Stomach (tissue), 19 donors: ENCODE measurements at regions of chr5 and their contacts with region 1.

Region 1: GRCh38 chr5:39005566-39006232 is 68.5 kb downstream of the RICTOR start:
- DNase-seq: peak in 1 of 2 donors; percentile 50
- H3K4me3 ChIP-seq: no peak overlapping the region
- H3K27ac ChIP-seq: no peak overlapping the region
- H3K4me1 ChIP-seq: peaks cover 0 to 12% (median 0%) of the 10 kb centered on the region in 4 donors
- H3K27me3 ChIP-seq: no peaks in the 10 kb centered on the region
- CTCF ChIP-seq: peak in 2 of 7 experiments; percentile 17 to 39
- EP300 ChIP-seq: no peak
- POLR2A ChIP-seq: no peak

Region 2: GRCh38 chr5:38202741-38203140 is 803.0 kb before region 1 on chr5:
- intact Hi-C with region 1: no loop called
- DNase-seq: no peak
- H3K4me3 ChIP-seq: no peak overlapping the region
- H3K27ac ChIP-seq: no peak overlapping the region
- H3K4me1 ChIP-seq: no peaks in the 10 kb centered on the region
- H3K27me3 ChIP-seq: peaks cover 0 to 12% (median 0%) of the 10 kb centered on the region in 3 donors
- CTCF ChIP-seq: no peak
- EP300 ChIP-seq: no peak
- POLR2A ChIP-seq: no peak

Region 3: DNA sequence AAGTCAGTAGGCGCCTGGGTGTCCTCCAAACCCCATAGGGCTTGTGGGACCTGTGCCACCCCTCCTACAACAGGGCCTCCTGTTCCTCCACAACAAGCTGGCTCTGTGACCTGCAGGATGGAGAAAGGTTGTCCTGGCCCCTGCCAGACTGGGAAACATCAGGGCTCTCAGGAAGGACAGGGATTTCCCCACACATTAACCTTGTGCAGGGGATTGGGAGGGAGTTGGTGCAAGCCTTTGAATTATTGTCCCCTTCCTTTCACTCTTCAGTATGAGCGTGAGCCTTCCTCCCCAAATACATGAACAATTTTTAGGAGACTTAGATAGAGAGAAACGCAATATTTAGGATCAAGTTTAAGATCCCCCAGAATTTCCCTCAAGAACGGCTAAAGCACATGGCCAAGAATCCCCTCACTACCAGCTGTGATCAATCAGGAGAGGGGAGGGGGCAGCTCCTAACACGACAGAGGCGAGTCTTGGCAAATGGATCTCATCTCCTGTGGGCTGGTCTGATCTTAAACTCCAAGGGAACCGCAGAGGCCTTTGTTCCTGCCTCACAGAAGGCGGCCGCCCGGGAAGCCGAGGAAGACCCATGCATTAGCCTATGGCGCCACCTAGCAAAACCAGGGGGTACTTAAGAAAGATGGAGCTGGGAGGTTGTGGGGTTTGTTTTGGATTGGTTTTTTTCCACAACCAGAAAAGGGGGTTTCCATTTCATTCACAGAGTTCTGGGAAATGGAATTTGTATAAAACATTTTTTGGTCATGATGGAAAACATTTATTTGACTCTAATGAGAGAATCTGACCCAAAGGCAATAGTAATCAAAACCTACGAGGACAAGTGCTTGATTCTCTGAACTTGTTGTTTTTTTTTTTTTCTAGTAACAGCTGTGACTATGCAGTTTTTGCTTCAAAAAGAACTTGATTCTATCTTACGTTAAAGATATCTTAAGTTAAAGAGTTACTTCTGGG is 196.0 kb before region 1 on chr5:
- intact Hi-C with region 1: no loop called
- DNase-seq: peak; percentile 85 to 96
- H3K4me3 ChIP-seq: no peak overlapping the region
- H3K27ac ChIP-seq: peak overlapping the region in 3 of 5 donors; percentile 9 to 71 (median 51)
- H3K4me1 ChIP-seq: peaks cover 0 to 28% (median 12%) of the 10 kb centered on the region in 4 donors
- H3K27me3 ChIP-seq: peaks cover 0 to 4% (median 0%) of the 10 kb centered on the region in 3 donors
- CTCF ChIP-seq: peak in 5 of 7 experiments; percentile 63 to 86 (median 80)
- EP300 ChIP-seq: no peak
- POLR2A ChIP-seq: no peak

Region 4: DNA sequence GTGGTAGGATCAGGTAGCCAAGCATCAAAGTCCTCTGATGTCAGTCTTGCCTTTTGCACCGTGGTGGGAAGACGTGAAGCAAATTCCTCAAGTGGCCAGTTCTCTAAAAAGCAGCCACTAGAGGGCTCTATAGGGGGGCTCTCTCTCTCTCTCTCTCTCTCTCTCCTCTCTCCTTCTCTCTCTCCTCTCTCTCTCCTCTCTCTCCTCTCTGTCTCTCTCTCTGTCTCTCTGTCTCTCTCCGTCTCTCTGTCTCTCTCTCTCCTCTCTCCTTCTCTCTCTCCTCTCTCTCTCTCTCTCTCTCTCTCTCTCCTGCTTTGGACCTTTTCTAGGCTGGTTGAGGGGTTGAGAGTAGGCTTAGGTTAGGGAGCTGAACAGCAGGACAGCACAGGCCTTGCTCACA is 173.8 kb before region 1 on chr5:
- intact Hi-C with region 1: no loop called
- DNase-seq: peak in 1 of 2 donors; percentile 49
- H3K4me3 ChIP-seq: no peak overlapping the region
- H3K27ac ChIP-seq: no peak overlapping the region
- H3K4me1 ChIP-seq: peaks cover 0 to 5% (median 2%) of the 10 kb centered on the region in 4 donors
- H3K27me3 ChIP-seq: no peaks in the 10 kb centered on the region
- CTCF ChIP-seq: peak in 4 of 7 experiments; percentile 16 to 82 (median 35)
- EP300 ChIP-seq: no peak
- POLR2A ChIP-seq: no peak

Region 5: GRCh38 chr5:39080597-39081204 is 75.0 kb after region 1 on chr5:
- intact Hi-C with region 1: loop called (anchors 10 kb)
- DNase-seq: peak; percentile 50 to 81
- H3K4me3 ChIP-seq: no peak overlapping the region
- H3K27ac ChIP-seq: no peak overlapping the region
- H3K4me1 ChIP-seq: peaks cover 0 to 31% (median 13%) of the 10 kb centered on the region in 4 donors
- H3K27me3 ChIP-seq: no peaks in the 10 kb centered on the region
- CTCF ChIP-seq: peak in 5 of 7 experiments; percentile 73 to 92 (median 86)
- EP300 ChIP-seq: no peak
- POLR2A ChIP-seq: no peak